Mammary epithelial cell (primary cell): ENCODE measurements at regions of chr4 and their contacts with region 1.

Region 1: DNA sequence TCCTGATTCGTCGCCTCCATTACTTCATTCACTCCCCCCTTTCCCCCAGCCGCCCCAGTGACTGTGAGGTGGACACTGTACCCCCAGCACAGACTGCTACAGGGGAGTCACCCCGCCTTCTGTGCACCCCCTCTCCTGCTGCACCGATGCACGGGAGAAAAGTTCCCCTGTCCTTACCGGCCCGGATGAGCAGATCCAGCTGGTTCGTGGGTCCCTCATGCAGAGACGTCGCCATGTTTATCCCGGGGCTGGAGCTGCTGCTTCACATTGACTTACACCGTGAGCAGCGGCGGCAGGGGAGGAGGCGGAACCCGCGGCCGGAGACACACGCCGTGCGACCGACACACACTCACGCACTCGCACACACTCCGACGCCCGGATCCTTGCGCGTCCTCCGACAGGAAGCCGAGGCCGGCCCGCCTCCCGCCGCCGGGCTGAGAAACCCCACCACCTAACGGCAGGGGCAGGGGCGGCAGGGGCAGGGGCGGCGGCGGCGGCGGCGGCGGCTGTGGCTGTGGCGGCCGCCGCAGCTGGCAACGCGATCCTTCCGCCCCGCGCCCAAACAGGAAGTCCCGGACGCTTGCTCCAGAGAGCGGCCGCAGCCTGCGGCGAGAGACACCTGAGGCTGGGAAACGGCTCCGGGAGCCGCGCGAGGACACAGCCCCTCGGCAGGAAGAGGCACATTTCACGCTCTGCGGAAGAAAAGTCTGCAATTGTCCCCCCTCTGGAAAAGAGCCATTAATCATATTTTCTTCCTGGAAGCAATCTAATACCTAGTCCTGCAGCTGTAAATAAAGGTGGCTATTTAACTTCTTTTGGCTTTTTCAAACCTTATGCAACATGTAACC is 68.6 kb downstream of the NOCT start:
- DNase-seq: peak; percentile 85
- H3K4me3 ChIP-seq: peak overlapping the region; percentile 74 to 80 (median 79)
- H3K27ac ChIP-seq: peak overlapping the region; percentile 85
- H3K4me1 ChIP-seq: no peaks in the 10 kb centered on the region
- H3K27me3 ChIP-seq: no peaks in the 10 kb centered on the region
- CTCF ChIP-seq: peak in 1 of 2 donors; percentile 17

Region 2: DNA sequence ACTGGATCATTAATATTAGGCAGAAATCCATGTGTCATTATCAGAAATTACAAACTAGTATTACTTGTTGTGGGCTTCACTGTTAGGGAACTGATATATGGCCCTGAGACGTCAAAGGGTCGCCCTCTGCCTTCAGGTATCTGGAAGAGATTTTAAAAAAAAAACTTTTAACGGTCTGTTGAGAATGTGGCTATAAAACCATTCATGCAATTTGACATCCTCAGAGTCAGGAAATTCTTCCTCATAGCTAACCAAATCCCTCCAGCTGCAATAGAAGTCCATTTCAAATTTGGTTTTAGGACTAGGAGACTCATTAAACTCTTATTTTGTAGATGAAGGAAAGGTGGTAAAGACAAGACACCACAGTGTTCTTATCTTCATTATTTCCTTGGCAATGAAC is 262.9 kb before region 1 on chr4:
- CTCF ChIA-PET with region 1: no interaction called
- dilution Hi-C with region 1: no loop called
- in situ Hi-C with region 1: no loop called
- intact Hi-C with region 1: no loop called
- DNase-seq: no peak
- H3K4me3 ChIP-seq: no peak overlapping the region
- H3K27ac ChIP-seq: no peak overlapping the region
- H3K4me1 ChIP-seq: no peaks in the 10 kb centered on the region
- H3K27me3 ChIP-seq: peaks cover 3% of the 10 kb centered on the region
- CTCF ChIP-seq: no peak

Region 3: DNA sequence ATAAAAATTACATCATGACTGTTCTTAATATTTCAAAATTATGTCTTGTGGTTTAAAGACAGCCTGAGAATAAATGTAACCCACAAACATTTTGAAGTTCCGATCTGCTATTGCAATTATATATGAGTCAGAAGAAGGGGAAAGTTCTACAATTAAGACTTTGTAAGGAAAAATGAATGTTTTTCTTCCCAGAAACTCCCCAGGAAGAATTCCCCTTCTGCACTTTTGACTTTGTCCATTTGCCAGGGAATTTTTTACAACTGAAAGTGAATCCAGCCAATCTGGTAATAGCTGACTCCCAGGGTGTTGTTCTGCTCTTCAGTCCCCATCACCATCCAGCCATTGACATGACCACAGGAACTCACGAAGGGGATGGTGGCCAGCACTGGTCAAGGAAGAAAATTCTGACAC is 130.2 kb before region 1 on chr4:
- CTCF ChIA-PET with region 1: no interaction called
- dilution Hi-C with region 1: no loop called
- in situ Hi-C with region 1: no loop called
- intact Hi-C with region 1: loop called (anchors 10 kb)
- DNase-seq: peak; percentile 95
- H3K4me3 ChIP-seq: no peak overlapping the region
- H3K27ac ChIP-seq: peak overlapping the region; percentile 26
- H3K4me1 ChIP-seq: peaks cover 32% of the 10 kb centered on the region
- H3K27me3 ChIP-seq: no peaks in the 10 kb centered on the region
- CTCF ChIP-seq: no peak

Region 4: GRCh38 chr4:139030614-139031235 is 53.5 kb before region 1 on chr4:
- CTCF ChIA-PET with region 1: interaction called, 36 read pairs
- dilution Hi-C with region 1: no loop called
- in situ Hi-C with region 1: no loop called
- intact Hi-C with region 1: loop called (anchors 1 kb)
- DNase-seq: peak; percentile 66
- H3K4me3 ChIP-seq: no peak overlapping the region
- H3K27ac ChIP-seq: no peak overlapping the region
- H3K4me1 ChIP-seq: no peaks in the 10 kb centered on the region
- H3K27me3 ChIP-seq: no peaks in the 10 kb centered on the region
- CTCF ChIP-seq: peak; percentile 82 to 93

Region 5: DNA sequence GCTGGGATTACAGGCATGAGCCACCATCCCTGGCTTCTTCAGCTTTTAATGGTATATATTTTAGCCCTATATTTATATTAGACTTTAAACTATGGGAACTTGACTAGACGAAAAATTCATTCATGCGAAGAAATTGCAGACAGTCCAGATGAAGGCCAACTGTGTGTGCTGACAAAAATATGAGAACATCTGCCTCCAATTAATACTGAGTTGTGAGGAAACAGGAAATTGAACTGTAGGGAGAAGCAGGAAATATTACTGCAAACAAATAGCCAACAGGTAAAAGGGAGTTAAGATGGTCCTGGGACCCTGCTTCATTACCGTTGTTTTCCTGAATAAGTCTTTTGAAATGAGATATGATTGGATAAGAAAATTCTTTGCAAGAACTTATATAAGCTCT is 169.5 kb after region 1 on chr4:
- CTCF ChIA-PET with region 1: no interaction called
- dilution Hi-C with region 1: no loop called
- in situ Hi-C with region 1: no loop called
- intact Hi-C with region 1: no loop called
- DNase-seq: no peak
- H3K4me3 ChIP-seq: no peak overlapping the region
- H3K27ac ChIP-seq: no peak overlapping the region
- H3K4me1 ChIP-seq: peaks cover 6% of the 10 kb centered on the region
- H3K27me3 ChIP-seq: no peaks in the 10 kb centered on the region
- CTCF ChIP-seq: no peak

Region 6: GRCh38 chr4:139301113-139301820 is 217.1 kb after region 1 on chr4 and contains the start of gene NAA15:
- CTCF ChIA-PET with region 1: no interaction called
- dilution Hi-C with region 1: no loop called
- in situ Hi-C with region 1: loop called in 1 of 2 experiments (anchors 10 kb)
- intact Hi-C with region 1: loop called (anchors 2 kb)
- DNase-seq: peak; percentile 97
- H3K4me3 ChIP-seq: peak within 1 kb of the TSS; percentile 76 to 94 (median 94)
- H3K27ac ChIP-seq: peak within 1 kb of the TSS; percentile 80
- H3K4me1 ChIP-seq: peaks cover 25% of the 10 kb centered on the region
- H3K27me3 ChIP-seq: no peaks in the 10 kb centered on the region
- CTCF ChIP-seq: no peak
- total RNA-seq, gene NAA15: 35.5 to 76.3 TPM